ENCODE measurements at regions of chr7 and their contacts with region 1.

Region 1: GRCh38 chr7:53518319-53518718 is 482.9 kb downstream of the POM121L12 start:
- DNase-seq: no peak
- ATAC-seq: no peak
- H3K4me3 ChIP-seq: no peak overlapping the region
- H3K27ac ChIP-seq: no peak overlapping the region
- H3K4me1 ChIP-seq: no peaks in the 10 kb centered on the region
- H3K27me3 ChIP-seq: no peaks in the 10 kb centered on the region

Region 2: DNA sequence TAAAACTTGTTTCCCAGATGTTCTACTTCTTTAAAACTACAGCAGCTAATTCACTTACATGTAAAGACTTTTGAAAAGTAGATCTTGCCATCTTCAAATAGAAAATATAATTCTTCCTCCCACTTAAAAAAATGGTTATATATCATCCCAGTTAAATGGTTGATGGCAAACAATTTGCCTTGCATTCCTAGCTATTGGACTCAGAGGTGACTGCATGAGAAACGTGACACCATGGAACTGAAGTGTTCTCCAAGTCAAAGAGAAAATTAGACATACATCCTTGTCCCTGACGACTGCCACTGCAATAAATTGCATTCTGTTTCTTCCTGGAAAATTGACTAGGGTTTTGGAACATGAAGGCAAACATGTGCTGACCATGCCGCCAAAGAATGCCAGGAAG is 577.8 kb before region 1 on chr7:
- intact Hi-C with region 1: no loop called
- DNase-seq: no peak
- ATAC-seq: no peak
- H3K4me3 ChIP-seq: no peak overlapping the region
- H3K27ac ChIP-seq: no peak overlapping the region
- H3K4me1 ChIP-seq: no peaks in the 10 kb centered on the region
- H3K27me3 ChIP-seq: no peaks in the 10 kb centered on the region

Region 3: GRCh38 chr7:53485354-53485753 is 33.0 kb before region 1 on chr7:
- intact Hi-C with region 1: loop called in 1 of 2 experiments (anchors 1 kb)
- DNase-seq: no peak
- ATAC-seq: no peak
- H3K4me3 ChIP-seq: no peak overlapping the region
- H3K27ac ChIP-seq: no peak overlapping the region
- H3K4me1 ChIP-seq: no peaks in the 10 kb centered on the region
- H3K27me3 ChIP-seq: no peaks in the 10 kb centered on the region

Region 4: DNA sequence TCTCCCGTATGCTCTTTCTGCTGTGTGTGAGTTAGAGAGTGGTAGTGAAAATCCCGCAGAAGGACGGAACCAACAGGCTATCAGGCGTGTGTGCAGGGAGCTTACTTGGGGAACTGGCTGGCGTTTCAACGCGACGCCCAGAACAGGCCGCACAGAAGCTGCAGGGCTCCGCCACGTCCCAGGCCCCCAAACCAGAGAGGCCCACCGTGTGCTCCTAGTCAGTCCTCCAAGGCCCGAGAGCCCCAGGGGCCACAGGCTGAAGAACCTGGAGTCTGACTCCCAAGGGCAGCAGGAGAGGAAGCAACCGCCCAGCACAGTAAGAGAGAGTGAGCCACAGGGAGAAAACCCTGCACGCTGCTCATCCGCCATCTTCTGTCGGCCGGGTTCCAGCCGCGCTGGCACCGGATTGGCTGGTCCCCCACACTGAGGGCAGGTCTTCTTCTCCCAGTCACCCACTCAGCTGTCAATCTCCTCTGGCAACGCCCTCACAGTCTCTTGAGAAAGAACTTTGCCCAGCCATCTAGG is 293.3 kb after region 1 on chr7:
- intact Hi-C with region 1: no loop called
- DNase-seq: no peak
- ATAC-seq: no peak
- H3K4me3 ChIP-seq: no peak overlapping the region
- H3K27ac ChIP-seq: no peak overlapping the region
- H3K4me1 ChIP-seq: no peaks in the 10 kb centered on the region
- H3K27me3 ChIP-seq: no peaks in the 10 kb centered on the region

Measured in aorta (tissue), 5 donors.